PC-3 (cell line): ENCODE measurements at regions of chr6 and their contacts with region 1.

Region 1: DNA sequence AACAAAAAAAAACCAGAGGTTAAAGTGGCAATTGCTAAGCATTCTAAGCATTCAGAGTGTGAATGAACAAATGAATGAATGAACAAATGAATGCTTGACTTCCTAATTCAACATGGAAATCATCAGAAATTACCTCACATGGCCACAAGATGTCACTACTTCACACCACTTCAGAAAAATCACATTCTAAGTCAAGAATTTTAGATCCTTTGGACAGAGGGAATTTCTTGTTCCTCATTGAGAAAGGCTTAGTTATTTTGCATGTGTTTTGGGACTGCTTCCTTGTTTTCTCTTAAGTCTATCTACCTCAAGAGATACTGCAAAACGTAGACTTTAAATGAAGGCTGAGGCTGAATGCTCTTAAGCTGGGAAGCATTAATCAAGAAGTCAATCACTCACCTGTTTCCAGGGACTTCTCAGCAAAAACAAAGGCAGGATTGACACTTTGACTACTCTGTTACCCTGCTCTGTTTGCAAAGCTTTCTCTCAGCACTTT is 120.2 kb downstream of the MBOAT1 start:
- DNase-seq: peak; percentile 73
- ATAC-seq: no peak
- H3K4me3 ChIP-seq: no peak overlapping the region
- H3K27ac ChIP-seq: no peak overlapping the region
- H3K4me1 ChIP-seq: no peaks in the 10 kb centered on the region
- H3K27me3 ChIP-seq: no peaks in the 10 kb centered on the region
- CTCF ChIP-seq: peak; percentile 69

Region 2: GRCh38 chr6:20126789-20127653 is 34.9 kb after region 1 on chr6:
- CTCF ChIA-PET with region 1: interaction called, 6 read pairs
- POLR2A ChIA-PET with region 1: no interaction called
- intact Hi-C with region 1: loop called (anchors 1 kb)
- DNase-seq: peak; percentile 68
- ATAC-seq: peak; percentile 92
- H3K4me3 ChIP-seq: no peak overlapping the region
- H3K27ac ChIP-seq: no peak overlapping the region
- H3K4me1 ChIP-seq: peaks cover 8% of the 10 kb centered on the region
- H3K27me3 ChIP-seq: no peaks in the 10 kb centered on the region
- CTCF ChIP-seq: peak; percentile 91

Region 3: GRCh38 chr6:20291764-20292580 is 199.9 kb after region 1 on chr6:
- CTCF ChIA-PET with region 1: no interaction called
- POLR2A ChIA-PET with region 1: no interaction called
- intact Hi-C with region 1: loop called (anchors 1 kb)
- DNase-seq: peak; percentile 93
- ATAC-seq: peak; percentile 92
- H3K4me3 ChIP-seq: no peak overlapping the region
- H3K27ac ChIP-seq: no peak overlapping the region
- H3K4me1 ChIP-seq: peaks cover 5% of the 10 kb centered on the region
- H3K27me3 ChIP-seq: 0 out of 2 replicates have a peak, but pooled peaks cover 3% of the 10 kb centered on the region
- CTCF ChIP-seq: peak; percentile 94

Region 4: DNA sequence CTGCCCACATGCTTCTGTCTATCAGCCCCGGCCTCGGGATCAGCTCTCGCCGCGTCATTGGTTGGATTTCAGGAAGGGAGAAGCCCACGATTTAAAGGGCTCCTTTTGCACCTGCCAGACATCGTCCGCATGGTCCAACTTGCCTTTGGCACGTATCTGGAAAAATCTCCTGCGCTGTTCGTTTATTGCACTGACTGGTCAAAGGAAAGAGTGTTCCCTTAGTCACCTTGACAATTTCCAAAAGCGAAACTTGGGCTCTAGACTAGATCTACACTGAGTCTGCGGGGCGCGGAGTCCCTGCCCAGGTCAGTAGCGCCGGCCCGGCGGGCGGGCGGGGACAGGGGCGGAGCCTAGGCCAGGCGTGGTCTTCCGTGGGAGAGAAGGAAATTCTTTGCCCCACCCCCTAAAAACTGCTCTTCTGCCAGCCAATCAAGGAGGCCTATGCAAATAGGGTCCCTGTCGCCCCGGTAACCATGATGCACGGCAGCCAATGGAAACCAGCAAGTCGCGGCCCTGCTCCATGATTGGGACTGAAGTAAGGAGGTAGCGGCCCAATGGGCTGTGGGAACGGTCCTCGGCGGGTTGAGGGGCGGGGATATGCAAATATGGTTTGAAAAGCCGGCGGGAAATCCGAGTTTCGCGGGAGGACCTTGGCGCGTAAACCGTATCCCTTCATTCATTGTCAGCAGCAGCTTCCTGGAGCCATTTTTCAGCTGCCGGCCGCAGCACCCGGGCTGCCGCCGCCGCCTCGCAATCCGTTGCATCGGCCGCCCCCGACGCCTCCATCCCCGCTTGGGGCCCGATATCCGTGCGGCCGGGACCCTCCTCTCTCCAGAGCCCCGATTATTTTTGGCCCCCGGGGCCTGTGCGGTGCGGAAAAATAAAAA is 309.3 kb after region 1 on chr6 and contains the start of gene E2F3:
- CTCF ChIA-PET with region 1: no interaction called
- POLR2A ChIA-PET with region 1: no interaction called
- intact Hi-C with region 1: loop called (anchors 5 kb)
- DNase-seq: peak; percentile 99
- ATAC-seq: peak; percentile 81
- H3K4me3 ChIP-seq: peak within 1 kb of the TSS; percentile 90
- H3K27ac ChIP-seq: peak within 1 kb of the TSS; percentile 96
- H3K4me1 ChIP-seq: peaks cover 15% of the 10 kb centered on the region
- H3K27me3 ChIP-seq: peaks cover 3% of the 10 kb centered on the region; the same call in 1 of the 2 replicates
- CTCF ChIP-seq: no peak
- total RNA-seq, gene E2F3: 8.8 and 10.8 TPM in 2 replicates

Region 5: GRCh38 chr6:20789162-20789561 is 697.0 kb after region 1 on chr6:
- CTCF ChIA-PET with region 1: no interaction called
- POLR2A ChIA-PET with region 1: no interaction called
- intact Hi-C with region 1: no loop called
- DNase-seq: no peak
- ATAC-seq: peak; percentile 55; the same call in 1 of the 2 replicates
- H3K4me3 ChIP-seq: no peak overlapping the region
- H3K27ac ChIP-seq: no peak overlapping the region
- H3K4me1 ChIP-seq: no peaks in the 10 kb centered on the region
- H3K27me3 ChIP-seq: no peaks in the 10 kb centered on the region
- CTCF ChIP-seq: no peak